ENCODE measurements at regions of chr4 and their contacts with region 1.

Region 1: DNA sequence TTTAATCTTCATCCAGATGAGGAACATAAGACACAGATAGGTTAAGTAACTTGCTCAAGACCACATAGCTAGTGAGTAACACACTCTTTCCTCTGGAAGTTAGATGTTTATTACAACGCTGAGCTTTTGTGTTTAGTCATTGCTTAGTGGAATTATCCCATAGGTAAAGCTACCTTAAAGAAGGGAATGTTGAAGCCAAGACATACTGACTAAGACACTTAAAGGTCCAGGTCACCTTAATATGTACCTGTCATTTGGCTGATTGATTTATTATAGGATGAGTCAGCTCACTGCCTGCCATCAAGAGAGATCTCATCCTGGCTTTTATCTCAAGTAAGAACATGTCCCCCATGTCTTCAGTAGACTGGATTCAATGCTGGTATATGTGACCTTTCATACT is 53.4 kb downstream of the KDR start:
- DNase-seq: no peak
- H3K4me3 ChIP-seq: no peak overlapping the region
- CTCF ChIP-seq: no peak
- POLR2A ChIP-seq: no peak

Region 2: GRCh38 chr4:55038176-55038890 is 33.6 kb before region 1 on chr4:
- intact Hi-C with region 1: loop called (anchors 1 kb)
- DNase-seq: peak in 1 of 2 donors; percentile 61
- H3K4me3 ChIP-seq: no peak overlapping the region
- CTCF ChIP-seq: no peak
- POLR2A ChIP-seq: no peak

Region 3: GRCh38 chr4:55143863-55144262 is 71.9 kb after region 1 on chr4:
- intact Hi-C with region 1: no loop called
- DNase-seq: no peak
- H3K4me3 ChIP-seq: no peak overlapping the region
- CTCF ChIP-seq: no peak
- POLR2A ChIP-seq: no peak